Activated CD4-positive, alpha-beta T cell treated with anti-CD3 and anti-CD28 coated beads, Interleukin-2, amount 10 ng/mL, durations not matched to agents 24 days and 14 days (primary cell): ENCODE measurements at regions of chr11 and their contacts with region 1.

Region 1: DNA sequence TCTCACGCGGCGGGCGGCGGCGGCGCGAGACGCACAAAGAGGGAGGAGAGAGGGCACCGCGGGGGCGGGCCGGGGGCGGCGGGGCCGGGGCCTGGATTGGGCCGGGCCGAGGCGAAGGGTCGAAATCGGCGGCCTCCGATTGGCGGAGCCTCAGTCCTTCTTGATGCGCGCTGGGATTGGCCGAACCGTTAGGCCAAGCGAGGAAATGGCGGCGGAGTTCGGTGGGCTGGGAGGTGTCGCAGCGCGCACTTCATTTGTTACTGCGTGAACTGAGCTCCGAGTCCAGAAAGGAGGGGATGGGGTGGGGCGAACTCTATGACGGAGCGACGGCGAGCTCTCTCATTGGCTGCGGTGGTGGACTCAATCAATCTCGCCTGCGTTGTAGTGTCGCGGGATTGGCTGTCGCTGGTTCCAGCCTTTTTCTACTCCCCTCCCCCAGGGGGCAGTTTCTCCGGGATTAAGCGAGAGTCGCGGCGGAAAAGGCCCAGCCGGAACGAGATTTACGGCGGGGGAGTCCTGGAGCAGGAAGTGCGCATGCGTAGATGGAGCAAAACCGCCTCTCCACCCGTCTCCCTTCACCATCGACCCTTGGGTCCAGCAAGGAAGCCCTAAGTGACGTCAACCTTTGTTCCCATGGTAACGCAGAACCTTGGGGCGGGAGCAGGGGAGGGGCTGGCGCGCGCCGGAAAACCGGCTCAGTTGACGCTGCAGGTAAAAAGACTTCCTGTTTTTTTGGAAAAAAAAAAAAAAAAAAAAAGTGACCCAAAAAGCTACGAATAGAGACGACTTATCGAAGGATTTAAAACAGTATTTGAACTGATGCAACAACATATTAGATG is at the start of gene SF1:
- DNase-seq: peak; percentile 100
- H3K4me3 Mint-ChIP-seq: peak within 1 kb of the TSS; percentile 94
- H3K27ac Mint-ChIP-seq: peak within 1 kb of the TSS; percentile 98
- H3K4me1 Mint-ChIP-seq: peaks cover 49% of the 10 kb centered on the region
- H3K27me3 Mint-ChIP-seq: no peaks in the 10 kb centered on the region
- total RNA-seq, gene SF1: 522 and 525 TPM in 2 replicates

Region 2: GRCh38 chr11:64240394-64241174 is 538.1 kb before region 1 on chr11 and contains the start of gene FKBP2:
- intact Hi-C with region 1: loop called (anchors 2 kb)
- DNase-seq: peak; percentile 100
- H3K4me3 Mint-ChIP-seq: peak within 1 kb of the TSS; percentile 95
- H3K27ac Mint-ChIP-seq: peak within 1 kb of the TSS; percentile 97
- H3K4me1 Mint-ChIP-seq: peaks cover 40% of the 10 kb centered on the region
- H3K27me3 Mint-ChIP-seq: no peaks in the 10 kb centered on the region
- total RNA-seq, gene FKBP2: 28.8 and 30.6 TPM in 2 replicates

Region 3: GRCh38 chr11:64767344-64768299 is 11.1 kb before region 1 on chr11:
- intact Hi-C with region 1: loop called (anchors 2 kb)
- DNase-seq: peak; percentile 95
- H3K4me3 Mint-ChIP-seq: peak overlapping the region; percentile 41
- H3K27ac Mint-ChIP-seq: peak overlapping the region; percentile 74
- H3K4me1 Mint-ChIP-seq: peaks cover 70% of the 10 kb centered on the region
- H3K27me3 Mint-ChIP-seq: no peaks in the 10 kb centered on the region

Region 4: DNA sequence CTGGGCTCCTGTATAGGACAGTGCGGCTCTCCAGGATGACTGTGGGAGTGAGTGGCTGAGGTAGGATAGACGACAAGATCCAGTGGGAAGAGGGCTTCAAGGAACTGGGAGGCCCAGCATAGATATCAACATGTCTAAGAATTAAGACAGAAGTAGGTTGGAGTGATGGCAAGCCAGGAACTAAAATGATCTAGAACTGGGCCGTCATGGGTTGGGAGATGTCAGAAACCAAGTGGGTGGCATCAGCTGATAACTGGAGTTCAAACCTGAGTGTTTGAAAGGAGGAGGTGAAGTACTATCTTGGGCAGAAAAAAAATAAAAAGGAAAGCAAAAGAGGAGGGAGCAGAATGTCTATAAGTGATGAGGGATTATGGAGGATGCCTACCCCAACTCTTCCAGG is 38.7 kb after region 1 on chr11:
- intact Hi-C with region 1: no loop called
- DNase-seq: no peak
- H3K4me3 Mint-ChIP-seq: no peak overlapping the region
- H3K27ac Mint-ChIP-seq: no peak overlapping the region
- H3K4me1 Mint-ChIP-seq: no peaks in the 10 kb centered on the region
- H3K27me3 Mint-ChIP-seq: peaks cover 2% of the 10 kb centered on the region

Region 5: GRCh38 chr11:64916775-64917662 is 138.3 kb after region 1 on chr11 and contains the start of gene ATG2A:
- intact Hi-C with region 1: loop called (anchors 2 kb)
- DNase-seq: peak; percentile 100
- H3K4me3 Mint-ChIP-seq: peak within 1 kb of the TSS; percentile 90
- H3K27ac Mint-ChIP-seq: peak within 1 kb of the TSS; percentile 92
- H3K4me1 Mint-ChIP-seq: peaks cover 23% of the 10 kb centered on the region
- H3K27me3 Mint-ChIP-seq: no peaks in the 10 kb centered on the region
- total RNA-seq, gene ATG2A: 22.5 and 23.1 TPM in 2 replicates

Region 6: GRCh38 chr11:64951529-64951928 is 172.8 kb after region 1 on chr11:
- intact Hi-C with region 1: no loop called
- DNase-seq: no peak
- H3K4me3 Mint-ChIP-seq: no peak overlapping the region
- H3K27ac Mint-ChIP-seq: no peak overlapping the region
- H3K4me1 Mint-ChIP-seq: no peaks in the 10 kb centered on the region
- H3K27me3 Mint-ChIP-seq: peaks cover 7% of the 10 kb centered on the region

Region 7: GRCh38 chr11:65680192-65680743 is 901.5 kb after region 1 on chr11:
- intact Hi-C with region 1: no loop called
- DNase-seq: no peak
- H3K4me3 Mint-ChIP-seq: no peak overlapping the region
- H3K27ac Mint-ChIP-seq: no peak overlapping the region
- H3K4me1 Mint-ChIP-seq: no peaks in the 10 kb centered on the region
- H3K27me3 Mint-ChIP-seq: peaks cover 12% of the 10 kb centered on the region

Region 8: GRCh38 chr11:66069715-66070603 is 1291.2 kb after region 1 on chr11 and contains the start of gene PACS1:
- intact Hi-C with region 1: loop called (anchors 5 kb)
- DNase-seq: peak; percentile 95
- H3K4me3 Mint-ChIP-seq: peak within 1 kb of the TSS; percentile 94
- H3K27ac Mint-ChIP-seq: peak within 1 kb of the TSS; percentile 92
- H3K4me1 Mint-ChIP-seq: peaks cover 53% of the 10 kb centered on the region
- H3K27me3 Mint-ChIP-seq: no peaks in the 10 kb centered on the region
- total RNA-seq, gene PACS1: 90.9 and 96.7 TPM in 2 replicates